T-cell (primary cell): ENCODE measurements at regions of chr18 and their contacts with region 1.

Region 1: GRCh38 chr18:12409469-12409868 is 1.7 kb downstream of the PRELID3A start:
- DNase-seq: no peak
- ATAC-seq: no peak
- H3K4me3 ChIP-seq: no peak overlapping the region
- H3K4me3 Mint-ChIP-seq: no peak overlapping the region
- H3K27ac ChIP-seq: no peak overlapping the region
- H3K27ac Mint-ChIP-seq: peak overlapping the region in 1 of 2 donors; percentile 48
- H3K4me1 ChIP-seq: peaks cover 7 to 18% of the 10 kb centered on the region in 2 experiments
- H3K4me1 Mint-ChIP-seq: peaks cover 10 to 23% (median 21%) of the 10 kb centered on the region in 3 donors
- H3K27me3 ChIP-seq: peaks cover 4 to 20% of the 10 kb centered on the region in 2 experiments
- H3K27me3 Mint-ChIP-seq: peaks cover 8 to 14% of the 10 kb centered on the region in 2 donors

Region 2: DNA sequence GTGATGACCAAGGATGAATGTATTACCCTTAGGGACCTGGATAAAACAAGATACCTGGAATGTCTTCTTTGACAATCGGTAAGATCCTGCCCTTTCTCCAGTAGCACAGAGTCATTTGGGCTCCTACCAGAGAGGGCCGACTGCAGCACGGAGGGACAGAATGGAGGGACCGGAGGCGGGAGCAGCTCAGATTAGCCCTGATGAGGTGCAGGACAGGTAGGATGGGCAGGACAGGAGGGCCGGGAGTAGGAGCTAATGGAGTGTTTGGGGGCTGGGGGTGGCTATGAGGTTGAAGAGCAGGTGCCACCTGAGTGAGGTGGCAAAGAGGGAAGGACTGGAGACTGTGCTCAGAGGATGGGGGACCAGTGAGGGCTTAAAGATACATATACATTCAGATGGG is 11.7 kb before region 1 on chr18:
- CTCF ChIA-PET with region 1: no interaction called
- POLR2A ChIA-PET with region 1: interaction called in 1 of 2 experiments, 11 read pairs
- DNase-seq: no peak
- ATAC-seq: no peak
- H3K4me3 ChIP-seq: no peak overlapping the region
- H3K4me3 Mint-ChIP-seq: no peak overlapping the region
- H3K27ac ChIP-seq: no peak overlapping the region
- H3K27ac Mint-ChIP-seq: no peak overlapping the region
- H3K4me1 ChIP-seq: no peaks in the 10 kb centered on the region
- H3K4me1 Mint-ChIP-seq: no peaks in the 10 kb centered on the region
- H3K27me3 ChIP-seq: peaks cover 0 to 66% of the 10 kb centered on the region in 2 experiments
- H3K27me3 Mint-ChIP-seq: peaks cover 32 to 44% of the 10 kb centered on the region in 2 donors